ENCODE measurements at regions of chr2 and their contacts with region 1.

Region 1: GRCh38 chr2:94982675-94983074 is 42.8 kb upstream of the MAL start:
- DNase-seq: peak; percentile 32
- ATAC-seq: peak; percentile 35; the same call in 1 of the 2 replicates
- H3K4me3 ChIP-seq: no peak overlapping the region
- H3K27ac ChIP-seq: no peak overlapping the region
- H3K4me1 ChIP-seq: no peaks in the 10 kb centered on the region
- H3K27me3 ChIP-seq: peaks cover 3% of the 10 kb centered on the region; the same call in 1 of the 2 replicates
- CTCF ChIP-seq: no peak
- POLR2A ChIP-seq: no peak
- RAD21 ChIP-seq: no peak

Region 2: DNA sequence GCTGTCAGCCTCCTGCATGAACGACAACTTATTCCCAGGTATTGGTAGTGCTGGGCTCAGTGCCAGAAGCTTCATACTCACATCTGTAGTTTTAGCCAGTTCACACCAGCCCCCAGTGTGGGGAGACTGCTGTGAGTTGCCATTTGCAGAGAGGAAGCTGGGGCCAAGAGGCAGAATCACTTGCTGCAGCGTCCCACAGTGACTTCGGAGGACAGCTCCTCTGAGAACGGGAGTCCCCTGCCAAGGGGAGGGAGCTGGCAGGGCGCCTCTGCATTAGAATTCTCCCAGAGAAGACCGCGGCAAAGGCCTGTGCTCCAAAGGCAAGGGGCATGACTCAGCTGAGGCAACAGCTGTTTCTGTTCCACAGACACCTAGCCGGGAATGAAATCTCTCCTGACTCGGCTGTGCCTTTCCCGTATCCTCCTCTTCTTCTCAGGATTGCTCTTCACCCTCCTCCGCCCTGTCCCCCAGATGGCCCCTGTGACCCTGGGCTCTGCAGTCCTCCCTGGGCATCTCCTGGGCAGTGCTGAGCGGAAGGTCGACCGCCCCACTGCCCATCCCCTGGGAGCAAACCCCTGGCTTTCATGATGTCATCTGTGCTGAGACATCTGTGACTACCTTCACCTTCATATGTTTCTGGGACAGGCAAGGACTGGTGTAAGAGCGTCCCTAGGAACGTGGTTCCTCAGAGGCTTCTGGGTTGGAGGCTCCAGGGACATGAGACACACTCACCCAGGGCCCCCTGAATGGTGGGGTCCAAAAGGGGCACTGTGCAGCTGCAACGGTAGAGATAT is 60.8 kb after region 1 on chr2:
- CTCF ChIA-PET with region 1: no interaction called
- POLR2A ChIA-PET with region 1: no interaction called
- dilution Hi-C with region 1: no loop called
- in situ Hi-C with region 1: no loop called
- intact Hi-C with region 1: no loop called
- DNase-seq: peak; percentile 90
- ATAC-seq: peak; percentile 93
- H3K4me3 ChIP-seq: no peak overlapping the region
- H3K27ac ChIP-seq: peak overlapping the region; percentile 59; the same call in 1 of the 2 replicates
- H3K4me1 ChIP-seq: peaks cover 14% of the 10 kb centered on the region
- H3K27me3 ChIP-seq: peaks cover 3% of the 10 kb centered on the region; the same call in 1 of the 2 replicates
- CTCF ChIP-seq: no peak
- POLR2A ChIP-seq: no peak
- RAD21 ChIP-seq: no peak

Region 3: DNA sequence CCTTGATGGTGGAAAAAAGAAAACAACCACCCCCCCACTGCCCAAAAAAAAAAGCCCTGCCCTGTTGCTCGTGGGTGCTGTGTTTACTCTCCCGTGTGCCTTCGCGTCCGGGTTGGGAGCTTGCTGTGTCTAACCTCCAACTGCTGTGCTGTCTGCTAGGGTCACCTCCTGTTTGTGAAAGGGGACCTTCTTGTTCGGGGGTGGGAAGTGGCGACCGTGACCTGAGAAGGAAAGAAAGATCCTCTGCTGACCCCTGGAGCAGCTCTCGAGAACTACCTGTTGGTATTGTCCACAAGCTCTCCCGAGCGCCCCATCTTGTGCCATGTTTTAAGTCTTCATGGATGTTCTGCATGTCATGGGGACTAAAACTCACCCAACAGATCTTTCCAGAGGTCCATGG is 70.9 kb after region 1 on chr2:
- CTCF ChIA-PET with region 1: interaction called, 7 read pairs
- POLR2A ChIA-PET with region 1: no interaction called
- dilution Hi-C with region 1: no loop called
- in situ Hi-C with region 1: no loop called
- intact Hi-C with region 1: loop called (anchors 2 kb)
- DNase-seq: no peak
- ATAC-seq: no peak
- H3K4me3 ChIP-seq: no peak overlapping the region
- H3K27ac ChIP-seq: no peak overlapping the region
- H3K4me1 ChIP-seq: peaks cover 7% of the 10 kb centered on the region; the same call in 1 of the 2 replicates
- H3K27me3 ChIP-seq: peaks cover 35% of the 10 kb centered on the region; the same call in 1 of the 2 replicates
- CTCF ChIP-seq: no peak
- POLR2A ChIP-seq: no peak
- RAD21 ChIP-seq: no peak

Measured in IMR-90 (cell line).